Activated naive CD4-positive, alpha-beta T cell treated with anti-CD3 and anti-CD28 coated beads, Interleukin-2, amount 10 ng/mL, durations not matched to agents 7 days and 5 days (primary cell): ENCODE measurements at regions of chr12 and their contacts with region 1.

Region 1: DNA sequence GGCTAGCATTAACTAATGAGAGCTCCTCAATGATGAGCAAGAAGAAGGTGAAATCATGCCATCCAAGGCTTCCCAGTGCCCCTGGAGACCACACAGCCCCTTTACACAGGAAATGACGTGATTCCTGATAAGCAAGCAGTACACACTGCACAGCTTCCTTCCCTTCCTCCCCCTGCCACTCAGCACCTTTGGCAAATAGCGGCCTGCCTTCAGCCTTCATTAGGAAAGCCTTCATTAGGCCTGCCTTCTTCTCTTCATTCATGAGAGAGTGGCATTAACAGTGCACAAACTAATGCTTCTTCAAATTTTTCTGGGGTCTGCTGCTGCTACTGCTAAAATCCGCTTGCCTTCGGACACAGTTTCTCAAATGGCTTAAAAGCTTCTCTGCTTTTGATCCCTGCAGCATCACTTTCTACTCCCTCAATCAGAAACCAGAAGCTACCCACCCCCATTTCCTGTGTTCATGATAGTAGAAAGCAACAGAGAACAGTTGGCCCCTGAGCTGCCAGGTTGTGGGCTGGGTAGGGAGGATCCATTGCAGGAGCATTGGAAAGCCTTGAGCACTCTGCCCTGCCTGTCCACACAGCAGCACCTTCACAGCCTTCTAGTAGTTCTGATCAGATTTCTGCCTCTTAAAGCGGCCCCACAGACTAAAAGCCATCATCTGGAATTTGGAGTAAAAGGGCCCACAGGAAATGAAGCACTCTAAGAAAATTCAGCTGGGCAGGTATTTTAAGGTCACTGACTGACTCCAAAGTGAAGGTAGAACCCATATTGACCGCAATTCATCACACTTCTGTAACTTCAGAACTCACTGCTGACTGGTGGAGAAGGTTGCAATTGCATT is 103.8 kb upstream of the ETV6 start:
- DNase-seq: peak; percentile 77
- H3K4me3 Mint-ChIP-seq: peak overlapping the region; percentile 61
- H3K27ac Mint-ChIP-seq: peak overlapping the region; percentile 96
- H3K4me1 Mint-ChIP-seq: peaks cover 61% of the 10 kb centered on the region
- H3K27me3 Mint-ChIP-seq: no peaks in the 10 kb centered on the region

Region 2: DNA sequence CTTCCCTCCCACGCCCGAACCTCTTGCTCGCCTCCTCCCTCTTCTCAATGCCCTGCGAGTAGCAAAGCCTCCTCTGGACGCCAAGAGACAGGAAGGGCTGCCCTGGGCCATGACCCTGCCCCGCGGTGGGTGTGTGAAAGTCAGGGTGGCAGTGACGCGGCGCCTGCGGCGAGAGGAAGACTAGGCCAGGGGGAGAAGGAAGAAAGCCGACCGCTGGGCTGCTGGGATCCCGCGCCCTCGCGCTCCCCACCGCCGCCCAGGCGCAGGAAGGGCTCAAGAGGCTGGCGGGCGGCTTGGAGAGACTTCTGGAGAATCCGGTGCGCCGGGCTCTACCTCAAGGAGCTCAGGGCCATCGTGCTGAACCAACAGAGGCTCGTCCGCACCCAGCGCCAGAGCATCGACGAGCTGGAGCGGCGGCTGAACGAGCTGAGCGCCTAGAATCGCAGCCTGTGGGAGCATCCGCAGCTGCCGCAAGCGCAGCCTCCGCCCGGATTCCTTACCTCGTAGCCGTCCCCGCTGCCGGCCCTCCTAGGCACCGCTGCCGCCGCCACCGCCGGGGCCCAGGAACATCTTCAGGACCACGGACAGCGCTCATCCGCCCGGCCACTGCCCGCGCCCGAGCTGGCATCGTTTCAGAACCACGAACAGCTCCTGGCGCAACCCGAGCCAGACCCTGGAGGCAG is 45.4 kb before region 1 on chr12:
- CTCF ChIA-PET with region 1: interaction called, 13 read pairs
- DNase-seq: peak; percentile 90
- H3K4me3 Mint-ChIP-seq: no peak overlapping the region
- H3K27ac Mint-ChIP-seq: no peak overlapping the region
- H3K4me1 Mint-ChIP-seq: peaks cover 7% of the 10 kb centered on the region
- H3K27me3 Mint-ChIP-seq: peaks cover 52% of the 10 kb centered on the region

Region 3: DNA sequence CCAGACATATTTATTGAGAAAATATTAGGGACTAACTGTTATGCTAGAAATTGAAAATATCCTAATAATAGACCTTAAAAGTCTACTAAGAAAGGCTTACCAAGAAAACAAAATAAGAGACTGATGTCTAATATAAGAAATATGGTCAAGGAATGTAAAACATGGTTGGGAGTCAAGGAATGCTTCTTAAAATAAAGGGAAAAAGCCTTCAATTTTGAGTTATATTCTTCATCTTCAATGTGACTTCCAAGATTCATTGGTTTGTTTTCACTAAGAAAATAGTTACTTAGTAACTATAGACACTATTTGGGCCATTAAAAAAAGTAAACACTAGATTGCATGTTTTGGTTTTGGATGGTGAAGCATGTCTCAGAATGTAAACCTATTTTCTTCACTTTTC is 15.7 kb after region 1 on chr12:
- CTCF ChIA-PET with region 1: no interaction called
- DNase-seq: no peak
- H3K4me3 Mint-ChIP-seq: no peak overlapping the region
- H3K27ac Mint-ChIP-seq: no peak overlapping the region
- H3K4me1 Mint-ChIP-seq: peaks cover under 1% of the 10 kb centered on the region
- H3K27me3 Mint-ChIP-seq: peaks cover 20% of the 10 kb centered on the region